ENCODE measurements at regions of chr12 and their contacts with region 1.

Region 1: GRCh38 chr12:51898937-51899336 is 8.4 kb upstream of the ACVRL1 start:
- DNase-seq: no peak
- H3K4me3 ChIP-seq: no peak overlapping the region
- H3K27ac ChIP-seq: no peak overlapping the region
- H3K4me1 ChIP-seq: no peaks in the 10 kb centered on the region
- H3K27me3 ChIP-seq: no peaks in the 10 kb centered on the region
- CTCF ChIP-seq: no peak
- EP300 ChIP-seq: no peak
- POLR2A ChIP-seq: no peak

Region 2: DNA sequence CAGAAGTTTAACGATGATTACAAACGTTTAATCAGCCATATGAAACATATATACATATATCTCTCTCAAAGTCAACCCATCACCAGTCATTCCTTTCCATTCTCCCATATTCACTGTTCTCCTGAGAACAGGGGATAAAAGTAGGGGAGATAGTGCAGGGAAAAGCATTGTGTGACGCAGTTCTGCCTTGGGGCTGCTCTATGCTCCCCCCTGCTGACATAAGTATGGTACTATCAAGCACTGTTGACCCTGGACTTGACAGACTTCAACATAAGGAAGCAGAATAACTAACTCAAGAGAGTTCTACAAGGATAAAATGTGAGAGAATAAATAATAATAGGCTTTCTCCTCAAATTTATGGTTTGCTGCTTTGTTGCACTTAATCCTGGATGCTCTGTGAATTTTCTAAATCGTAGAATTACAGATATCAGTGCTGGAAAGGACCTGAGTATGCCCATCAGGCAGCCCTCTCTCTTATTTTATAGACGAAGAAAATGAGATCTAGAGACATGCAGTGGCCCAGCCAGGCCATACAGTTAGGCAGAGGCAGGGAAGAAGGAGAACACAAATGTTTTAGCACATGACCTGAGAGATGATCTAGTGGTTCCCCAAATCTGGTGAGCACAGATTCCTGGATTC is 220.7 kb before region 1 on chr12:
- intact Hi-C with region 1: no loop called
- DNase-seq: no peak
- H3K4me3 ChIP-seq: no peak overlapping the region
- H3K27ac ChIP-seq: no peak overlapping the region
- H3K4me1 ChIP-seq: no peaks in the 10 kb centered on the region
- H3K27me3 ChIP-seq: no peaks in the 10 kb centered on the region
- CTCF ChIP-seq: no peak
- EP300 ChIP-seq: no peak
- POLR2A ChIP-seq: no peak

Region 3: GRCh38 chr12:51980051-51980808 is 81.3 kb after region 1 on chr12:
- intact Hi-C with region 1: loop called in 3 of 4 experiments (anchors 5 kb)
- DNase-seq: peak; percentile 49 to 73 (median 66)
- H3K4me3 ChIP-seq: no peak overlapping the region
- H3K27ac ChIP-seq: no peak overlapping the region
- H3K4me1 ChIP-seq: no peaks in the 10 kb centered on the region
- H3K27me3 ChIP-seq: no peaks in the 10 kb centered on the region
- CTCF ChIP-seq: peak; percentile 82 to 88 (median 86)
- EP300 ChIP-seq: no peak
- POLR2A ChIP-seq: no peak

Region 4: GRCh38 chr12:52203075-52203921 is 304.4 kb after region 1 on chr12:
- intact Hi-C with region 1: no loop called
- DNase-seq: peak in 4 of 5 donors; percentile 37 to 54 (median 49)
- H3K4me3 ChIP-seq: no peak overlapping the region
- H3K27ac ChIP-seq: no peak overlapping the region
- H3K4me1 ChIP-seq: peaks cover 1% of the 10 kb centered on the region
- H3K27me3 ChIP-seq: no peaks in the 10 kb centered on the region
- CTCF ChIP-seq: no peak
- EP300 ChIP-seq: no peak
- POLR2A ChIP-seq: no peak